H1 (cell line): ENCODE measurements at regions of chr12 and their contacts with region 1.

Region 1: DNA sequence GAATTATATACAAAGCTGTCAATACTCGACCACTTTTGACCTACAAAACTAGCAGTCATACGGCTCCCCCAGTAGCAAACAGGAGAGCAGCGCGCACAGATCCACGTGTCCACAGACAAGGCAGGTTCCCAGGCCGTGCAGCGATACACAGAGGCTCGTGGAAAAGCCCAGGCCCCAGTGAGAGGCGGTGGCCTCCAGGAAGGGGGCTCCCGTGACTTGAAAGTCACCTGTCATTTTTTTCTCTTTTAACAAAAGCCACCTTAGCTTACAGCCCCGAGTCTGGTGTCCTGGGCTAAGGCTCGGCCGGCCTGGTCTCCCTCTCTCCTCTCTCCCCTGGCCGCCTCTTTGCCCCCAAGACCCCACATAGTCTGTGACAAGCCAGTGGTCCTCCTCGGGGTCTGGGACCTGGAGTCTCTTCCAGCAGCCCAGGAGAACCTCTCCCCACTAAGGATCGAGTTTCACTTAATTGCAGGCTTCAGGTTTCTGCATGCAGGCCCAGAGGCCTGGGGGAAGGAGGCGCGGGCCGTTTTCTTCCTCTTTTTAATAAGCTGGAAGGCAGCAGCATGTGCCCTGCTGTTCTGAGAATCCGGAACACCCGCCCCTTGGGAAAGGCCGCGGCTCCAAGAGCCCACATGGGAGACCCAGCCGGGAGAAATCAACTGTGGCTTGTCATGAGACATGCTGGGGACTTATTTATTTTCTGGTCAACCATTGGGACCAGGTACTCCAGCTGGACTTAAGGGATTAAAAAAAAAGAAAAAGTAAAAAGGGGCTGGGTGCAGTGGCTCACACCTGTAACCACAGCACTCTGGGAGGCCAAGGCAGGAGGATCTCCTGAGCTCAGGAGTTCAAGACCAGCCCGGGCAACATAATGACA is 15.9 kb downstream of the NCOR2 start:
- DNase-seq: no peak
- H3K4me3 ChIP-seq: peak overlapping the region in 1 of 4 experiments; percentile 16; a peak in 1 of 8 replicates
- H3K27ac ChIP-seq: no peak overlapping the region
- H3K4me1 ChIP-seq: peaks cover 7 to 38% (median 15%) of the 10 kb centered on the region in 4 experiments
- H3K27me3 ChIP-seq: no peaks in the 10 kb centered on the region
- CTCF ChIP-seq: no peak
- EP300 ChIP-seq: no peak
- POLR2A ChIP-seq: no peak
- RAD21 ChIP-seq: no peak; a peak in 1 of 4 replicates

Region 2: GRCh38 chr12:124332068-124332672 is 219.3 kb before region 1 on chr12:
- CTCF ChIA-PET with region 1: no interaction called
- POLR2A ChIA-PET with region 1: no interaction called
- DNase-seq: no peak
- H3K4me3 ChIP-seq: no peak overlapping the region
- H3K27ac ChIP-seq: 0 out of 2 replicates have a peak overlapping the region, but pooled peaks have one; percentile 4
- H3K4me1 ChIP-seq: peaks cover 0 to 4% (median 0%) of the 10 kb centered on the region in 4 experiments; a peak in 2 of 7 replicates
- H3K27me3 ChIP-seq: no peaks in the 10 kb centered on the region
- CTCF ChIP-seq: peak in 2 of 3 experiments; percentile 51 to 55; a peak in 3 of 4 replicates
- EP300 ChIP-seq: no peak
- POLR2A ChIP-seq: no peak
- RAD21 ChIP-seq: peak; percentile 61 to 70

Region 3: GRCh38 chr12:124518051-124518932 is 33.2 kb before region 1 on chr12:
- CTCF ChIA-PET with region 1: interaction called, 10 read pairs
- POLR2A ChIA-PET with region 1: interaction called, 4 read pairs
- DNase-seq: no peak
- H3K4me3 ChIP-seq: no peak overlapping the region
- H3K27ac ChIP-seq: peak overlapping the region; percentile 54
- H3K4me1 ChIP-seq: peaks cover 9 to 29% (median 24%) of the 10 kb centered on the region in 4 experiments
- H3K27me3 ChIP-seq: no peaks in the 10 kb centered on the region
- CTCF ChIP-seq: no peak
- EP300 ChIP-seq: no peak
- POLR2A ChIP-seq: no peak
- RAD21 ChIP-seq: no peak

Region 4: GRCh38 chr12:124566161-124566996 is 14.9 kb after region 1 on chr12:
- CTCF ChIA-PET with region 1: interaction called, 6 read pairs
- POLR2A ChIA-PET with region 1: interaction called, 31 read pairs
- DNase-seq: peak in 1 of 2 experiments; percentile 85
- H3K4me3 ChIP-seq: peak overlapping the region; percentile 77 to 86 (median 78)
- H3K27ac ChIP-seq: peak overlapping the region; percentile 83; the same call in 1 of the 2 replicates
- H3K4me1 ChIP-seq: peaks cover 22 to 36% (median 31%) of the 10 kb centered on the region in 4 experiments
- H3K27me3 ChIP-seq: no peaks in the 10 kb centered on the region
- CTCF ChIP-seq: no peak
- EP300 ChIP-seq: no peak
- POLR2A ChIP-seq: peak in 1 of 2 experiments; percentile 28; a peak in 1 of 3 replicates
- RAD21 ChIP-seq: no peak

Region 5: GRCh38 chr12:124745891-124746570 is 194.5 kb after region 1 on chr12:
- CTCF ChIA-PET with region 1: no interaction called
- POLR2A ChIA-PET with region 1: no interaction called
- DNase-seq: peak; percentile 67 to 82
- H3K4me3 ChIP-seq: peak overlapping the region in 1 of 4 experiments; percentile 33; a peak in 2 of 8 replicates
- H3K27ac ChIP-seq: peak overlapping the region; percentile 70; the same call in 1 of the 2 replicates
- H3K4me1 ChIP-seq: peaks cover 0 to 16% (median 8%) of the 10 kb centered on the region in 4 experiments; a peak in 6 of 7 replicates
- H3K27me3 ChIP-seq: no peaks in the 10 kb centered on the region
- CTCF ChIP-seq: no peak
- EP300 ChIP-seq: peak; percentile 62 to 74; a peak in 2 of 3 replicates
- POLR2A ChIP-seq: no peak; a peak in 1 of 3 replicates
- RAD21 ChIP-seq: peak in 1 of 2 experiments; percentile 24; a peak in 2 of 4 replicates